ENCODE measurements at regions of chr1 and their contacts with region 1.

Region 1: DNA sequence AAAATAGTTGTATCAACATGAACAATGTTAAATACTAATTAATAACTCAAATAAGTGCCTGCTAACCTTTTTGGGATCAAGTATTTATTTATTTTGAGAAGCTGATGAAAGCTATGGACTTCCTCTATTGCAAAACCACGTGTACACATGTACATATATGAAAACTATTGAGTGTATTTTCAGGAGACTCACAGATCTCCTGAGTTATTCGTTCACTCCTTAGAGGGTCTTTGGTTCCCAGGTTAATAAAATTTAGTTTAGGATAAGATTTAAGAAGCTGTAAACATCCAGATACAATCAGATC is 130.5 kb downstream of the DISC1 start:
- DNase-seq: no peak
- ATAC-seq: peak; percentile 53
- H3K4me3 ChIP-seq: no peak overlapping the region
- H3K27ac ChIP-seq: no peak overlapping the region
- H3K4me1 ChIP-seq: no peaks in the 10 kb centered on the region
- H3K27me3 ChIP-seq: no peaks in the 10 kb centered on the region
- CTCF ChIP-seq: no peak
- POLR2A ChIP-seq: no peak
- RAD21 ChIP-seq: no peak

Region 2: DNA sequence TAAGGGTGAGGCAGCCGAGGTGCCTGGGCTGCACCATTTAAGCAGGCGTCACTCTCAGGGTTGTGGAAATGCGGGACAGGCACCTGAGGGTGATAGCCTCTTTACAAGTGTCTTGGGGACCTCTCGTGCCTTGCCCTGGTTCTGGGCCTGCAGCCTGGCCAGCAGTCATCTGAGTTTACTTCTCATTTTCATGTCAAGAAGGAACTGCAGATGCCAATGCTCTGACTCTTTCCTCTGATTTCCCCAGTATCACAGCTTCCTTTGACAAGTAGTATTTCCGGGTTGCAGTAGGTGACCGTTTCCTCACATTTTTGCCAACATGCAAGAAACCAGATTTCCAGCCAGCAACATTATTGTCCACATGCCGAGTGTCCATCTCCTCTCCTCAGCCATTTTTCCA is 156.4 kb after region 1 on chr1:
- CTCF ChIA-PET with region 1: no interaction called
- POLR2A ChIA-PET with region 1: no interaction called
- dilution Hi-C with region 1: no loop called
- in situ Hi-C with region 1: no loop called
- intact Hi-C with region 1: no loop called
- DNase-seq: peak; percentile 24
- ATAC-seq: 0 out of 2 replicates have a peak, but pooled peaks have one; percentile 32
- H3K4me3 ChIP-seq: no peak overlapping the region
- H3K27ac ChIP-seq: no peak overlapping the region
- H3K4me1 ChIP-seq: peaks cover 5% of the 10 kb centered on the region
- H3K27me3 ChIP-seq: no peaks in the 10 kb centered on the region
- CTCF ChIP-seq: no peak
- POLR2A ChIP-seq: no peak
- RAD21 ChIP-seq: no peak

Region 3: GRCh38 chr1:231931846-231932454 is 174.9 kb after region 1 on chr1:
- CTCF ChIA-PET with region 1: no interaction called
- POLR2A ChIA-PET with region 1: no interaction called
- dilution Hi-C with region 1: no loop called
- in situ Hi-C with region 1: no loop called
- intact Hi-C with region 1: loop called (anchors 10 kb)
- DNase-seq: no peak
- ATAC-seq: no peak
- H3K4me3 ChIP-seq: no peak overlapping the region
- H3K27ac ChIP-seq: no peak overlapping the region
- H3K4me1 ChIP-seq: peaks cover 2% of the 10 kb centered on the region; the same call in 1 of the 2 replicates
- H3K27me3 ChIP-seq: no peaks in the 10 kb centered on the region
- CTCF ChIP-seq: peak; percentile 26; the same call in 1 of the 2 replicates
- POLR2A ChIP-seq: no peak
- RAD21 ChIP-seq: no peak

Region 4: DNA sequence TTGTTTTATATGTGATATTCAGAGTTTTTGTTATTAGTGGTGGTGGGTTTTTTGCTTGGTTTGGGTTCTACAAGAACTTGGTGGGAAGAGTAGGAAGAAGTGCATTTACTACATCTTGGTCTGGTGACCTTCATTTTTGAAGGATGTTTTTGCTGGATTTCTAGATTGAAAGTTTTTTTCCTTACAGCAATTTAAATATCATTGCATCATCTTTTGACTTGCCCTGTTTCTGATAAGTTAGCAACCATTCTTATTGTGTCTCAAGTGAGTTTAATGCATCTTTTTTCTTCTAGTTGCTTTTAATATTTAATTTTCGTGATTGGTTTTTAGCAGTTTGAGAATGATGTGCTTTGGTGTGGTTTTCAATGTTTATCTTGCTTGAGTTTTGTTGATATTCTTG is 317.2 kb after region 1 on chr1:
- CTCF ChIA-PET with region 1: no interaction called
- POLR2A ChIA-PET with region 1: no interaction called
- dilution Hi-C with region 1: no loop called
- in situ Hi-C with region 1: no loop called
- intact Hi-C with region 1: no loop called
- DNase-seq: no peak
- ATAC-seq: no peak
- H3K4me3 ChIP-seq: no peak overlapping the region
- H3K27ac ChIP-seq: no peak overlapping the region
- H3K4me1 ChIP-seq: no peaks in the 10 kb centered on the region
- H3K27me3 ChIP-seq: no peaks in the 10 kb centered on the region
- CTCF ChIP-seq: no peak
- POLR2A ChIP-seq: no peak
- RAD21 ChIP-seq: no peak

Region 5: DNA sequence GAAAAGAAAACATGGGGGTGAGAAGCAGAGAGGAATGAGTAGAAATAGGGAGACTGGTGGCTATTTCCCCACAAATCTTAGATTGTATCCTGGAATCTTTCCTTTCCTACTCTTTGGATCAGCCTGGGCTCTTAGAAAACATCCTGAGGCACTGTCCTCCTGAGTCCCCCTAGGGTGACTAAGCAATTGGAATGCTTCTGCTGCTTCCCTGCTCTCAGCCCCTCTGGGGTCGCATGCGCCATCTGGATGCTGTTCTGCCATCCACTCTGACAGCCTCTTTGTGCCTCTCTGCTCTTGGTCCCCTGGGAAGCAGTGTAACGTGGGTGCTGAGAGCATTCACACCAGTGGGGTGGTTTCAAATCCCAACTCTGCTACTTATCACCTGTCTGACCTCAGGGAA is 429.9 kb after region 1 on chr1:
- CTCF ChIA-PET with region 1: no interaction called
- POLR2A ChIA-PET with region 1: no interaction called
- dilution Hi-C with region 1: no loop called
- in situ Hi-C with region 1: no loop called
- intact Hi-C with region 1: no loop called
- DNase-seq: no peak
- ATAC-seq: 0 out of 2 replicates have a peak, but pooled peaks have one; percentile 32
- H3K4me3 ChIP-seq: no peak overlapping the region
- H3K27ac ChIP-seq: no peak overlapping the region
- H3K4me1 ChIP-seq: no peaks in the 10 kb centered on the region
- H3K27me3 ChIP-seq: peaks cover 8% of the 10 kb centered on the region
- CTCF ChIP-seq: no peak
- POLR2A ChIP-seq: no peak
- RAD21 ChIP-seq: no peak

Measured in IMR-90 (cell line).